ENCODE measurements at regions of chr1 and their contacts with region 1.

Region 1: DNA sequence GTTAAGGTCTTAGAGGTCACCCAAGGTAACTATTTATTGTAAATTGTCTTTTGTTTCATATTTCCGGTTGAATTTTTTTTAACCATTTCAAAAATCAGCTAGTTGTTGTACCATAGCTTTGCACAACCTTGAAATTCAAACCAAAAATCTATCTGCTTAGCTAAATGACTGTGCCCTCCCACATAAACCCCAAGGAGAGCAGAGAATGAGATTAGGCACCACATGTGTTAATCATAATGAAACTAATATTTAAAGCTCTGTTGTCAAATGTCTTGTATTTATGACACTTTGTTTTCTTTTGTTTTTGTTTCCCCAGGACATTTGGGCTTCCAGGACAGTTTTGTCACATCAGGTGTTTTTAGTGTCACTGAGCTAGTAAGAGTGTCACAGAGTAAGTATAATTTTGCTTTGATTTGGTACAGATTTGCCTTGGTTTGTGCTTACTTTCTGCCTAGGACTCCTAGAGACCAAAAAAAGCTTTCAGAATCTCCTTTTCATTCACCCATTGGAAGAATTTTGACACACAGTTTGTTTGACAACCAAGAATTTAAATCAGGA is 249.9 kb downstream of the NFIA start:
- DNase-seq: peak; percentile 55
- ATAC-seq: peak; percentile 89
- H3K4me3 Mint-ChIP-seq: no peak overlapping the region
- H3K27ac Mint-ChIP-seq: peak overlapping the region; percentile 63
- H3K4me1 Mint-ChIP-seq: peaks cover 13% of the 10 kb centered on the region
- H3K27me3 Mint-ChIP-seq: no peaks in the 10 kb centered on the region
- CTCF ChIP-seq: no peak

Region 2: GRCh38 chr1:61244114-61244513 is 88.2 kb before region 1 on chr1:
- CTCF ChIA-PET with region 1: no interaction called
- POLR2A ChIA-PET with region 1: no interaction called
- intact Hi-C with region 1: no loop called
- DNase-seq: no peak
- ATAC-seq: no peak
- H3K4me3 Mint-ChIP-seq: no peak overlapping the region
- H3K27ac Mint-ChIP-seq: no peak overlapping the region
- H3K4me1 Mint-ChIP-seq: peaks cover 3% of the 10 kb centered on the region
- H3K27me3 Mint-ChIP-seq: no peaks in the 10 kb centered on the region
- CTCF ChIP-seq: no peak

Region 3: GRCh38 chr1:61301824-61302657 is 30.2 kb before region 1 on chr1:
- CTCF ChIA-PET with region 1: interaction called, 9 read pairs
- POLR2A ChIA-PET with region 1: interaction called, 3 read pairs
- intact Hi-C with region 1: loop called (anchors 2 kb)
- DNase-seq: peak; percentile 48
- ATAC-seq: peak; percentile 86
- H3K4me3 Mint-ChIP-seq: no peak overlapping the region
- H3K27ac Mint-ChIP-seq: peak overlapping the region; percentile 89
- H3K4me1 Mint-ChIP-seq: peaks cover 32% of the 10 kb centered on the region
- H3K27me3 Mint-ChIP-seq: peaks cover 1% of the 10 kb centered on the region
- CTCF ChIP-seq: no peak